A549 (cell line): ENCODE measurements at regions of chr3 and their contacts with region 1.

Region 1: DNA sequence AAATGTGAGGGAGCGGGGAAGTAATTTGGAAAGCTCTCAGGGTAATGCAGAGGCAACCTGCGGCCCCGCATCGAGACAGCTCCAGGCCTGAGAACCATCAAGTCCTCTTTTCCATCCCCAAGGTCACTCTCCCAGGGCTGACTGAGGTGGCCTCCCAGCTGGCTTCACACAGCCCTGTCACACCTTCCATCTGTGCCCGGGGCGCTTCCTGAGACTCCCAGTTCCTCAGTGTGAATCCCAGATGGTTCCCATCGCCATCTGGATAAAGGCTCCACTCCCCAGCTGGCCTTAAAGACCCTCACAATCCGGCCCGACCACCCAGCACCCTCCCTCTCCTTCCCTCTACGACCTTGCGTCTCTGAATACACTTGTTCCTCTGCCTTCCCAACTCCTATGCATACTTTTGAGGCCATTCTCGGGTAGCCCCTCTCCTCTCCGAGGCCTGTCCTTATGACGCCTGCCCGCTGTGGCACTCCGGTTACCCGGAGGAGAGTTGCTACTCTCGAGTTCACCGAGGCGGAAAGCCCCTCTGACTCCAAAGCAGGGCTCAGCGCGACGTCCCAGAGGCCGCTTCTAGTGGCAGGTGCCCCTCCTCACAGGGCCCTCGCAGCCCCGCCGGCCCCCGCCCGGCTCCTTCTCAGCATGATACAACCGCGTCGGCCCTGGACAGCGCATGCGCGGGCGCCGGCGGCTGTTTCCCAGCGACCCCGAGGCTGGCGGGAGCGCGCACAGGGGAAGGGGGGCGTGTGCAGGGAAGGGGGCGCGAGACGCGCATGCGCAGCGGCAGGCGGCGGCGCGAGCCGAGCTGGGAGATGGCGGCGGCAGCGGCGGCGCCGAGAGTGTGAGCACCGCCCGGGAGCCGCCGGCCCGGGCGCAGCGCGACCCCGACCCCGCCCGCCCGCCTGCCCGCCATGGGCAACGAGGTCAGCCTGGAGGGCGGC is at the start of gene BSN:
- DNase-seq: peak; percentile 81 to 82
- ATAC-seq: peak; percentile 85 to 87
- H3K4me3 ChIP-seq: peak within 1 kb of the TSS; percentile 67
- H3K27ac ChIP-seq: peak within 1 kb of the TSS; percentile 84 to 94
- H3K4me1 ChIP-seq: peaks cover 8% of the 10 kb centered on the region; the same call in 2 of the 3 replicates
- CTCF ChIP-seq: no peak
- EP300 ChIP-seq: no peak
- POLR2A ChIP-seq: peak; percentile 32; the same call in 1 of the 2 replicates
- RAD21 ChIP-seq: no peak
- polyA plus RNA-seq, gene BSN: 0.04 and 0.05 TPM in 2 replicates

Region 2: DNA sequence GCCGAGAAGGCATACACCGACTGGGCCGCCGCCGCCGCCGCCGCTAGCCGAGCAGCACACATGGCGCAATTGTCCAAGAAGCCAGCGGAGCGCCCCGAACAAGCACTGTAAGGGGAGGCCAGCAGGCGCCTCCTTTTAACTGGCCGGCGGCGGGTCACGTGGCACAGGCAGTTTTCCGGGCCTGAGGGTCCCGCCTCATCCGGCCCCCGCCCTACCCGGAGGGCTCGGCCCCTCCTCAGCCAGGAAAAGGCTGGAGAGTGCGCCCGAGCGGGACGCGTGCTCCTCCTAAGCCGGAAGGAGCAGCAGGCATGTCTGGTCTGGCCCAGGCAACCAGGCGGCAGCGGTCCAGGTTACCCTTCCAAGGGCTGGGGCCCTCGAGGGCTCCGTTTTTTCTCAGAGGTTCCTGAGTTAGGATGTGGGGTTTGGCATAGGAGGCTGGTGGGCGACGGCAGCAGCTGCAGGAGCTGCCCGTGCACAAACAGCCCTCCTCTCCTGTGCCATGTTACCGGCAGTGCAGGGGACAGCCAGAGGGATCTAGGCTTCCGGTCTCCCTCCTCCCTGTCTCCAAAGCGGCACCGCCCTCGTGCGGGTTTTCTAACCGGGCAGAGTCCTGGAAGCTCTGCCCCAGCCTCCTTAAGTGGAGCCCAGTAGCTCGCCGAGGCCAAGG is 195.6 kb before region 1 on chr3 and contains the start of gene GPX1:
- CTCF ChIA-PET with region 1: no interaction called
- POLR2A ChIA-PET with region 1: no interaction called
- DNase-seq: peak; percentile 77 to 93
- ATAC-seq: peak; percentile 91 to 93
- H3K4me3 ChIP-seq: peak within 1 kb of the TSS; percentile 67
- H3K27ac ChIP-seq: peak within 1 kb of the TSS; percentile 87 to 99
- H3K4me1 ChIP-seq: peaks cover 18% of the 10 kb centered on the region; the same call in 2 of the 3 replicates
- CTCF ChIP-seq: no peak
- EP300 ChIP-seq: no peak
- POLR2A ChIP-seq: peak; percentile 57
- RAD21 ChIP-seq: no peak
- polyA plus RNA-seq, gene GPX1: 150 and 157 TPM in 2 replicates

Region 3: DNA sequence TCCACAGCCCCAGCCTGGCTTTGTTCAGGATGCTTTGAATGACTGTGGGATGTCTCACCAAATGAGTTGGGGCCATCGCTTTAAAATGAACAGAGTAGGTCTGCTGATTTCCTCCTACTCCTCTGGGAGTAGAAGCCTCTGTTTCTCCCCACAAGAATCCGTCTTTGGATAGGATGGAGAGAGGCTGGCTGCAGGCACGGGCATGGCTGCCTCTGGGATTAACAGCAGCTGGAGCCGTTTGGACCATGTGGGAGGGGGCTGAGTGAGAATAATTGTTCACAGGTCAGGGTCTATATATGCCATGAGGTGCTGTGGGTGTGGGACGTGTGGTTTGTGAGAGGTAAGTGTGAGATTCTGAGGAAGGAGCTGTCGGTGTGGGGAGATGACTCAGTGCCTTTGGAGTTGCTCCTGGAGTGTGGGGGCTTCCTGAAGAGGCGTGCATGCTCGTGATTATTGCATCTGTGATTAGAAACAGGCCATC is 72.2 kb after region 1 on chr3:
- CTCF ChIA-PET with region 1: no interaction called
- POLR2A ChIA-PET with region 1: no interaction called
- DNase-seq: no peak
- ATAC-seq: no peak
- H3K4me3 ChIP-seq: no peak overlapping the region
- H3K27ac ChIP-seq: no peak overlapping the region
- H3K4me1 ChIP-seq: no peaks in the 10 kb centered on the region
- CTCF ChIP-seq: no peak
- EP300 ChIP-seq: no peak
- POLR2A ChIP-seq: no peak
- RAD21 ChIP-seq: no peak

Region 4: GRCh38 chr3:49673715-49674496 is 119.9 kb after region 1 on chr3 and contains the start of gene APEH:
- CTCF ChIA-PET with region 1: interaction called, 26 read pairs
- POLR2A ChIA-PET with region 1: interaction called, 4 read pairs
- DNase-seq: peak; percentile 90 to 98
- ATAC-seq: peak; percentile 88 to 92
- H3K4me3 ChIP-seq: peak within 1 kb of the TSS; percentile 99
- H3K27ac ChIP-seq: peak within 1 kb of the TSS; percentile 91 to 97
- H3K4me1 ChIP-seq: peaks cover 19% of the 10 kb centered on the region
- CTCF ChIP-seq: no peak
- EP300 ChIP-seq: no peak
- POLR2A ChIP-seq: peak; percentile 51
- RAD21 ChIP-seq: no peak
- polyA plus RNA-seq, gene APEH: 60.8 and 74.9 TPM in 2 replicates